ENCODE measurements at regions of chr9 and their contacts with region 1.

Region 1: GRCh38 chr9:19230356-19231125 is at the start of gene DENND4C:
- DNase-seq: peak; percentile 85 to 87 (median 85)
- H3K4me3 ChIP-seq: peak within 1 kb of the TSS; percentile 53 to 73
- H3K4me3 Mint-ChIP-seq: peak within 1 kb of the TSS in 6 of 8 donors; percentile 82 to 89 (median 88)
- H3K27ac ChIP-seq: peak within 1 kb of the TSS; percentile 73
- H3K27ac Mint-ChIP-seq: peak within 1 kb of the TSS in 6 of 7 donors; percentile 62 to 93 (median 90)
- H3K4me1 ChIP-seq: peaks cover 25% of the 10 kb centered on the region
- H3K4me1 Mint-ChIP-seq: peaks cover 5 to 11% (median 9%) of the 10 kb centered on the region in 4 donors
- H3K27me3 ChIP-seq: no peaks in the 10 kb centered on the region
- H3K27me3 Mint-ChIP-seq: no peaks in the 10 kb centered on the region
- total RNA-seq, gene DENND4C: 69.0 to 71.8 TPM

Region 2: DNA sequence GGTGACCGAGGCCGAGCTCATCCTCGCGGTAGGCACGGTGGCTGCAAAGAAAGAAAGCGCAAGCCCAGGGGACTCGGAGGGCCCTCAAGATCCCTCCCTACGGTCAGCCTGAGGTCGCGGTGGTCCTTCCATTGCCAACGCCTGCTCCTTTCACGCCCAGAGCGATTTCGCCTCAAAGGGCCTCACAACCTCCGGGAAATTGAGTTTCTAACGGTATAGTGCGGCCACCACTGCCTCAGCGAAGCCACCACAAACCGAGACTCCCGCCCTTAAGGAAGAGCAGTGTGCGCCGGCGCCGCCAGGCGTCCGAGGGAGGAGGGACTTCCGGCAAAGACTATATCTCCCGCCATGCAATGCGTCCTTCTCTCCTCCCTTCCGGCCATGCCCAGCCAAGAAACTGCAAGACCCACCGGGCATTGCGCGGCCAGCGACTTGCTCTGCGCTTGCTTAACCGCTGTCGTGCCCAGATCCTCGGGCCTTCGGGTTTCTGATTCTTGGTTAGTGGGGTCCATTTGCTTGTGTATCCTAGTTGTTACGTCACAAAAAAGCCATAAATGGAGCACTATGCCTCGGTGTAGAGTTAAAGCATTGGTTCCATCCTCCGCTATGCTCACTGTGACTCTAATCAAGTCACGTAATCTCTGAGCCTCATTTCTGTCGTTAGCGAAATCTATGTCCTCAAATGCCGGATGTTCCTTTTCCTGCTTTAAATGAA is 127.8 kb before region 1 on chr9 and contains the start of gene HAUS6:
- CTCF ChIA-PET with region 1: no interaction called
- POLR2A ChIA-PET with region 1: interaction called, 8 read pairs
- intact Hi-C with region 1: loop called (anchors 1 kb)
- DNase-seq: peak; percentile 93 to 98 (median 96)
- H3K4me3 ChIP-seq: peak within 1 kb of the TSS; percentile 73 to 74
- H3K4me3 Mint-ChIP-seq: peak within 1 kb of the TSS; percentile 91 to 98 (median 98)
- H3K27ac ChIP-seq: peak within 1 kb of the TSS; percentile 74
- H3K27ac Mint-ChIP-seq: peak within 1 kb of the TSS; percentile 91 to 98 (median 96)
- H3K4me1 ChIP-seq: peaks cover 28% of the 10 kb centered on the region
- H3K4me1 Mint-ChIP-seq: peaks cover 15 to 39% (median 20%) of the 10 kb centered on the region in 4 donors
- H3K27me3 ChIP-seq: no peaks in the 10 kb centered on the region
- H3K27me3 Mint-ChIP-seq: no peaks in the 10 kb centered on the region
- total RNA-seq, gene HAUS6: 19.4 to 20.9 TPM

Region 3: DNA sequence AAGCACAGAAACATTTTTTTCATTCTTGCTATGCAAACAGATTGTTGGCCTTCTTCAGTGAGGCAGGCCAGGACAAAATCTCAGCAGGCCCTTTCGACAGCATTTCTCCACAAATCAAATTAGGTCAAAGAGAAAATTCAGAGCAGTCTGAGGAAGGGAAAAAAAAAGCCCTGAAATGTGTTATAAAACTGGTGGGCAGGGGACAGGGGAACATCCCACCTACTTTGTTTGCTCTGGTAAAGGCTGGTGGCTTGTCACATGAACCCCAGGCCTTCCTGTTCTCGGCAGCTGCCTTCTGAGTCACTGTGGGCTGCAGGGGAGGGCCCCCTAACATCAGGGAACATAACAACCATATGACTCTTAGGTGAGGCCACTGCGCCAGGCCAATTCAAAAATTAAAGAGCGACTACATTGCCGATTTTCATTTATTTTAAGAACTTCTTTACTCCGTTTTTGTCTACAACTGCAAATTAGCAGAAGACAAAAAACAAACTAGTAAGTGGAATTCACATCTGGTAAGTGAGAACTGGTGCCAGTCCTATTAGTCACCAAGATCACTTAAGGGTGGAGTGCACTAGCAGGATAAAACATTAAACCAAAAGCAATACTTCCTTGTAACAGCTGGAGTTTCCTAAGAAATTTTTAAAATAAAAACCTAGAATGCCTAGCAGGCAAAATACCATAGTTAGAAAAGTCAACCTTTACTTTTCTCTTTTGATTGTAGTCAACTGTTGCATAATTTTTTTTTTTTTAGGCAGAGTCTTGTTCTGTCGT is 46.2 kb before region 1 on chr9:
- CTCF ChIA-PET with region 1: interaction called, 4 read pairs
- POLR2A ChIA-PET with region 1: interaction called, 54 read pairs
- intact Hi-C with region 1: loop called (anchors 1 kb)
- DNase-seq: peak; percentile 57 to 90 (median 73)
- H3K4me3 ChIP-seq: no peak overlapping the region
- H3K4me3 Mint-ChIP-seq: peak overlapping the region in 7 of 8 donors; percentile 26 to 73 (median 51)
- H3K27ac ChIP-seq: peak overlapping the region; percentile 60
- H3K27ac Mint-ChIP-seq: peak overlapping the region; percentile 89 to 97 (median 95)
- H3K4me1 ChIP-seq: peaks cover 22% of the 10 kb centered on the region
- H3K4me1 Mint-ChIP-seq: peaks cover 9 to 20% (median 15%) of the 10 kb centered on the region in 4 donors
- H3K27me3 ChIP-seq: no peaks in the 10 kb centered on the region
- H3K27me3 Mint-ChIP-seq: no peaks in the 10 kb centered on the region

Region 4: GRCh38 chr9:19320495-19320894 is 90.0 kb after region 1 on chr9:
- CTCF ChIA-PET with region 1: no interaction called
- POLR2A ChIA-PET with region 1: no interaction called
- intact Hi-C with region 1: loop called (anchors 5 kb)
- DNase-seq: no peak
- H3K4me3 ChIP-seq: no peak overlapping the region
- H3K4me3 Mint-ChIP-seq: no peak overlapping the region
- H3K27ac ChIP-seq: no peak overlapping the region
- H3K27ac Mint-ChIP-seq: no peak overlapping the region
- H3K4me1 ChIP-seq: no peaks in the 10 kb centered on the region
- H3K4me1 Mint-ChIP-seq: peaks cover 0 to 15% (median 7%) of the 10 kb centered on the region in 4 donors
- H3K27me3 ChIP-seq: no peaks in the 10 kb centered on the region
- H3K27me3 Mint-ChIP-seq: no peaks in the 10 kb centered on the region

Region 5: GRCh38 chr9:19408693-19409400 is 178.3 kb after region 1 on chr9 and contains the start of gene ACER2:
- CTCF ChIA-PET with region 1: no interaction called
- POLR2A ChIA-PET with region 1: no interaction called
- intact Hi-C with region 1: loop called (anchors 2 kb)
- DNase-seq: peak; percentile 91 to 97 (median 93)
- H3K4me3 ChIP-seq: peak within 1 kb of the TSS; percentile 94 to 100
- H3K4me3 Mint-ChIP-seq: peak within 1 kb of the TSS; percentile 91 to 96 (median 96)
- H3K27ac ChIP-seq: peak within 1 kb of the TSS; percentile 69
- H3K27ac Mint-ChIP-seq: peak within 1 kb of the TSS; percentile 65 to 94 (median 90)
- H3K4me1 ChIP-seq: peaks cover 23% of the 10 kb centered on the region
- H3K4me1 Mint-ChIP-seq: peaks cover 5 to 24% (median 16%) of the 10 kb centered on the region in 4 donors
- H3K27me3 ChIP-seq: no peaks in the 10 kb centered on the region
- H3K27me3 Mint-ChIP-seq: no peaks in the 10 kb centered on the region
- total RNA-seq, gene ACER2: 5.9 to 6.0 TPM

Measured in CD4-positive, alpha-beta memory T cell (primary cell).